WTC11 (cell line): ENCODE measurements at regions of chr11 and their contacts with region 1.

Region 1: GRCh38 chr11:95150946-95151684 is 61.5 kb downstream of the ENDOD1 start:
- DNase-seq: peak; percentile 96
- ATAC-seq: peak; percentile 93
- H3K4me3 Mint-ChIP-seq: peak overlapping the region; percentile 81
- H3K27ac Mint-ChIP-seq: peak overlapping the region; percentile 94
- H3K4me1 Mint-ChIP-seq: peaks cover 14% of the 10 kb centered on the region
- H3K27me3 Mint-ChIP-seq: peaks cover 51% of the 10 kb centered on the region
- CTCF ChIP-seq: no peak

Region 2: DNA sequence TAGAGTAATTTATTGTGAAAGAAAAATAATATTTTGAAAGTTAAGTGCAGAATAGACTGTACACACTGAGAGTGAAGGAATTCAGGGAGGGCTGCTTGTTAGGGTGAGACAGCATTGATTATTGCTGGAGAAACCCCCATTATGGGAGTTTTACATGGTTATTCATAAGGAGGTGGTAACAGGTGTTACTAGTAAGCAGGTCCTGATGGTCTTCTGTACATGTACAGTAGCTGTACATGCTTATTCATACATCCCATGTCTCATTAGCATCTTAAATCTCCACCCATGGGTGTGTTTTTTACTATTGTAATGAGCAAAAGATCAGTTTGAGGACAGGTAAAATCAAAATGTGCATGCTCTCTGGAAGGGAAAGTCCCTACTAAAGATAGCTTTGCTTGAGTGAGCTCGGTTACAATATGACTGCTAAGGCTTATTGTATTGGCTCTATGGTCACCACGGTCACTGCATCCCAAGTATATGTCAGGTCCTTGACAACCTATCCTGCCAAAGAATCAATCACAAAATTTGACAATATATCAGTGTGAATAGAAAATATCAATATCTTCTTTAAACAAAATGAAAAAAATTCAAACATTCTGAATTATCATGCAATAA is 95.7 kb before region 1 on chr11:
- CTCF ChIA-PET with region 1: no interaction called
- POLR2A ChIA-PET with region 1: no interaction called
- DNase-seq: no peak
- ATAC-seq: no peak
- H3K4me3 Mint-ChIP-seq: no peak overlapping the region
- H3K27ac Mint-ChIP-seq: no peak overlapping the region
- H3K4me1 Mint-ChIP-seq: no peaks in the 10 kb centered on the region
- H3K27me3 Mint-ChIP-seq: peaks cover 32% of the 10 kb centered on the region
- CTCF ChIP-seq: no peak

Region 3: DNA sequence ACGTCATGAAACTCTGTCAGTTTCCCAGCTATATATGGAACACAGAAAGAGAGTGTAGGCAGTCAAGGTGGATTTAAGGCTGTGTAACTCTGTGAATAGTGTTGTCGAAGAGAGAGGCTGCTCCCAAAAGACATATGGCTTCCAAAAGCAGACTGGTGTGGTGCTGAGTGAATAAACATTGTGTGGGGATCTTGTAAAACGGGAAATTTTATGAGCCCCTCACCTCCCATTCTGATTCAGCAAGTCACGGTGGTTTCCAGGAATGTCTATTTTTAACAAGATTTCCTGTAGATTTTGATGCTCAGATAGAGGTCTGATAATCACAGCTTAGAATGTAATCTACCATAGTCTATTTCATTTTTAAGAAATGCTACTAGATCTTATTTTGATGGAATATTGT is 12.0 kb after region 1 on chr11:
- CTCF ChIA-PET with region 1: interaction called, 12 read pairs
- POLR2A ChIA-PET with region 1: no interaction called
- DNase-seq: no peak
- ATAC-seq: no peak
- H3K4me3 Mint-ChIP-seq: no peak overlapping the region
- H3K27ac Mint-ChIP-seq: no peak overlapping the region
- H3K4me1 Mint-ChIP-seq: peaks cover 18% of the 10 kb centered on the region
- H3K27me3 Mint-ChIP-seq: no peaks in the 10 kb centered on the region
- CTCF ChIP-seq: no peak

Region 4: DNA sequence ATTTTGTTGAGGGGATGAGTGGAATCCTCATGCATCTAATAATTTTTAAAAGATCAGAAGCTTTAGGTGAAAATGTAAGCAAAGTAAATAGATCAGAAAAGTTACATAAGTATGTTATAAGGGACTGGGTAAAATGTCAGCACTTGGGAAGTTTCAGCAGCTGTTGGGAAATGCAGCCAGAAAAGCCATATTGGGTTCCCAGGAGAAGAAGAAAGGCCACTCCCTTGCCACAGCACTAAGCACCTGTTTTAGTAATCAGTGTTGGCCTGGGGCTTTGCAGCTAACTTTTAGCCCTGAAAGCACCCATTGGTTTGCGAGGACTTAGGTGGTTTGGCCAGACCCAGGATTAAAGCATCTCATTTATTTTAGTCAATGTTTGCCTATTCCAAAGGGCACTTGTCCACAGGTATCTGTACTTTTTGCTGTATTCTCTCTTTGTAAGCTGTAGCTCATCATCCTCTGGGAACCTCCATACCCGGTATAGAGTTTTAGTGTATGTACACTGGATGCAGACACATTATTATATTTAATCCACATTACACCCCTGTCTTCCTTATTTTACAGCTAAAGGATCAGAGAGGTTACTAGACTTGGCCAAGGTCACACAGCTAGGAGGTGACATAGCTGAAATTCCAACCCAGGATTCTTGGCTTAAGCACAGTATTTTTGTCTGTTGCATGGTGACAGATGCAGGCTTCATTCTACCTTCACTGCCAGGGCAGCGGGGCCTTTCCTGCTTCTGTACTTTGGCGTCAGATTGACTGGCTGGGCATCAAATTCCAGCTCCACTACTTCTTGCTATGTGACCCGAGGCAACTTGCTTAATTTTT is 207.6 kb after region 1 on chr11:
- CTCF ChIA-PET with region 1: interaction called, 10 read pairs
- POLR2A ChIA-PET with region 1: no interaction called
- DNase-seq: no peak
- ATAC-seq: no peak
- H3K4me3 Mint-ChIP-seq: no peak overlapping the region
- H3K27ac Mint-ChIP-seq: no peak overlapping the region
- H3K4me1 Mint-ChIP-seq: peaks cover 43% of the 10 kb centered on the region
- H3K27me3 Mint-ChIP-seq: peaks cover 4% of the 10 kb centered on the region; the same call in 1 of the 2 replicates
- CTCF ChIP-seq: no peak

Region 5: DNA sequence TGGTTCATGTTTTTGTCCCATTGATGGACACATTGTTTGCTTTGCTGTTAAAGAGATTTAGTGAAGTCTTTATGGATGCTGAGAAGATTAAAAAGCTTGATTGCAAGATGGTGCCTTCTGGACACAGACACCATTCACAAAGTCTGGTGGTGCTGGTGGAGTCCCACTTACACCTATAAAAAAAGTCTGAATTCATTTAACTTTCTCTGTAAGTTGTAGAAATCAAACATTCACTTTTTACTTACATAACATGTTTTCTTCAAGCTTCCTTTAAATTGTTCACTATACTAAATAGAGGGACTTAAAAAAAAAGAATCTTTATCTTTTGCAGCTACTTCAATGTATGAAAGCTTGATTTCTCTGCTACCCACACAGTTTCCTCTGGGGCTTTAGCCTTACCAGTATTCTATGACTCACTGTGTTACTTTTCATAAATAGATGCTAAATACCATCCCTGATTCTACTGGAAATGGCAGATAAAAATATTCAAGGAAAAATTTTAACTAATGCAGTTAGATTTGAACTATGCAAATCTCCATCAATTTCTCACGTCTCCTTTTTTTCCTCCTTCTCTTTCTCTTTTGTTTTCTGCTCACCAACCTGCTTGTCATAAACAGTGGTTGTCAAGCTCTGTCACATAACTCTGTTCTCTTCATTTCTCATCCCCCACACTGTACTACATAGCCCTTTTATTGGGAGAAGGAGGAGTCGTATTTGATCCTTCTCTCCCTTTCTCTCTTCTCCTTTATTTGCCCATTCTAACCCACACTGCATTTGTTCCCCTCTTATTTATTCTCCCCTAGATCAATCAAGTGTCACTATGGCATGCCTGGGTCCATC is 548.7 kb after region 1 on chr11:
- CTCF ChIA-PET with region 1: interaction called, 143 read pairs
- POLR2A ChIA-PET with region 1: interaction called, 3 read pairs
- DNase-seq: no peak
- ATAC-seq: no peak
- H3K4me3 Mint-ChIP-seq: no peak overlapping the region
- H3K27ac Mint-ChIP-seq: no peak overlapping the region
- H3K4me1 Mint-ChIP-seq: peaks cover 10% of the 10 kb centered on the region
- H3K27me3 Mint-ChIP-seq: no peaks in the 10 kb centered on the region
- CTCF ChIP-seq: no peak

Region 6: DNA sequence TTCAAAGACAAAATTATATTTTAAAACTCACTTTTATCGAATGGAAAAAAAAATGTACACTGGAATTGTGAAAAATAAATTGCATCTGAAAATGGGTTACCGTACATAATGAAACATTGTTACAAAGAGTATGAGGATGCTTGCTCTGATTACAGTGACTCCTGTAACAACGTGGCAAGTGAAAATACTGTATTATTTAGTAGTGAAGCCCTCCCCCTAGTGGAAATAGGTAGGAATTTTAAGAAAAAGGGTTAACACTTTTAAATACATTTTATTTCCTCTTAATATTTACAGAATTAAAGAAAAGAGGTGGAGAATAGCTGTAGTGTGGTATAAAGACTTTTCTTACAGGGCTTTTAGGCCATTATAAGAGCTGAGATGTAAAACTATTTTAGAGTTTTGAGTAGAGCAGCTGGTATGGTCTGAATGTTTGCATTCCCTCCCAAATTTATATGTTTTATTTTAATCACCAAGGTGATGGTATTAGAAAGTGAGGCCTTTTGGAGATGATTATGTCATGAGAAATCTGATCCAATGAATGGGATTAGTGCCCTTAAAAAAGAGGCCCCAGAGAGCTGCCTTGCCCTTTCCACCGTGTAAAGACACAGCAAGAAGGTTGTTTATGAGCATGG is 613.3 kb after region 1 on chr11:
- CTCF ChIA-PET with region 1: interaction called, 36 read pairs
- POLR2A ChIA-PET with region 1: interaction called, 3 read pairs
- DNase-seq: no peak
- ATAC-seq: peak; percentile 38
- H3K4me3 Mint-ChIP-seq: no peak overlapping the region
- H3K27ac Mint-ChIP-seq: no peak overlapping the region
- H3K4me1 Mint-ChIP-seq: no peaks in the 10 kb centered on the region
- H3K27me3 Mint-ChIP-seq: no peaks in the 10 kb centered on the region
- CTCF ChIP-seq: peak; percentile 51; the same call in 1 of the 2 replicates